Activated B cell treated with CpG ODN at 0.5 μM for 24 hours (primary cell): ENCODE measurements at regions of chr1 and their contacts with region 1.

Region 1: DNA sequence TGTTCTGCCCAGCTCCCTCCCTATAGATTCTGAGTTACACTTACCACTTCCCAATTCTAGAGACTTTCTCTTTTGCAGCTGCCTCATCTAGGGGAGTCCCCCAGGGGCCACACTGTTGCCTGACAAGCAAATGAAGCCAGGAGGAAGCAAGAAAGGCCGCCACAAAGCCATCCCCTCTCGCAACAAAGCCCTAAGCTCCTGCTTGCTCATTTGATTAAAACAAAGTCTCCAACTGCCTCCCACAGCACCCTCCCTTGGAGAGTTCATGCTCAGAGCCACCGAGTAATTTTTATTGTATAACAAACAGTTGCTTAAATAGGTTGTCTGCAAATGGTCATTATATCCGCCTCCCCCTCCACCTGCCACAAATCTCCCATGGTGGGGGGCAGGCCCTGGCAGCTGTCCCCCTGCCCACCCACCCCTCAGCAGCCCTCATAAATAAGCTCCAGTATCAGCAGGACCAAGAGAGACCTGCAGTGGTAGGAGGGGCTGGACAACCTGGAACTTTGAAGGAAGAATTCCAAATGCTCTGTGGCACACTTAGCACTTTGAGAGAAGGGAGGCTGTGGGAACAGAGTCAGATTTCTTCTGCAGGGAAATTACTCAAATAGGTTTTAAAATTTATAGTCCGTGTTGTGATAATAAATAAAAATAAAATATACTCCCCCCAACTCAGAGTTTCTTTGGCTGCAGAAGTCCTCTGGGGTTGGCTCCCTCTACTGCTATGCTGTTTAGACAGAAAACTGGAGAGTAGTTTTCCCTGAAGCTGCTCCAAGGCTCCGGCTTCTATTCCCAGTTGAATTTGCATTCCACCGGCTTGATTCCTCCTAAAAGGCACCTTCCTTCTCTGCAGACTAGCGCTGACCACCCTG is 237.5 kb downstream of the TTLL7 start:
- DNase-seq: peak; percentile 52
- ATAC-seq: peak; percentile 99
- H3K4me3 Mint-ChIP-seq: peak overlapping the region; percentile 39
- H3K27ac Mint-ChIP-seq: peak overlapping the region; percentile 75
- H3K4me1 Mint-ChIP-seq: peaks cover 37% of the 10 kb centered on the region
- H3K27me3 Mint-ChIP-seq: no peaks in the 10 kb centered on the region
- CTCF ChIP-seq: no peak

Region 2: DNA sequence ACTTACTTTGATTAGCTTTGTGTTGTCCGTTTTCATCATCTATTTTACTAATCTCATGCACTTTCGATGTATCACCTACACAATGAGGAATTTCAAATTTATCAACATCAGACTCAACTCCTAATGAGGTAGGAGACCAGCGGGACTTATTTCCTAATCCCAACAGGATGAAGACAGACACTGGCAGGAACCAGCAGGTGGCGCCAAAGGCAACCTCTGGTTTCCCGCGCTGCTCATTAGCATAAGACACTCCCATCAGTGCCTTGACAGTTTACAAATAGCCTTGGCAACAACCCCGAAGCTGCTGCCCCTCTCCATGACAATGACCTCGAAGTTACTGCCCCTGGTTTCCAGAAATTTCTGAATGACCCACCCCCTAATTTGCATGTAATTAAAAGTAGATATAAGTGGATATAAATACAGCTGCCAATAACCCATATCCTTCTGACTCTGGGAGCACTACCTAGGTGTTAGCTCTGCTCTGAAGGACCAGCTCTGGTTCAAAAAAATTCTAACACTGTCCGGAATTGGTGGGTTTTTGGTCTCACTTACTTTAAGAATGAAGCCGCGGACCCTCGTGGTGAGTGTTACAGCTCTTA is 985.9 kb before region 1 on chr1:
- CTCF ChIA-PET with region 1: no interaction called
- POLR2A ChIA-PET with region 1: no interaction called
- intact Hi-C with region 1: loop called (anchors 10 kb)
- DNase-seq: no peak
- ATAC-seq: no peak
- H3K4me3 Mint-ChIP-seq: no peak overlapping the region
- H3K27ac Mint-ChIP-seq: no peak overlapping the region
- H3K4me1 Mint-ChIP-seq: no peaks in the 10 kb centered on the region
- H3K27me3 Mint-ChIP-seq: no peaks in the 10 kb centered on the region
- CTCF ChIP-seq: no peak

Region 3: DNA sequence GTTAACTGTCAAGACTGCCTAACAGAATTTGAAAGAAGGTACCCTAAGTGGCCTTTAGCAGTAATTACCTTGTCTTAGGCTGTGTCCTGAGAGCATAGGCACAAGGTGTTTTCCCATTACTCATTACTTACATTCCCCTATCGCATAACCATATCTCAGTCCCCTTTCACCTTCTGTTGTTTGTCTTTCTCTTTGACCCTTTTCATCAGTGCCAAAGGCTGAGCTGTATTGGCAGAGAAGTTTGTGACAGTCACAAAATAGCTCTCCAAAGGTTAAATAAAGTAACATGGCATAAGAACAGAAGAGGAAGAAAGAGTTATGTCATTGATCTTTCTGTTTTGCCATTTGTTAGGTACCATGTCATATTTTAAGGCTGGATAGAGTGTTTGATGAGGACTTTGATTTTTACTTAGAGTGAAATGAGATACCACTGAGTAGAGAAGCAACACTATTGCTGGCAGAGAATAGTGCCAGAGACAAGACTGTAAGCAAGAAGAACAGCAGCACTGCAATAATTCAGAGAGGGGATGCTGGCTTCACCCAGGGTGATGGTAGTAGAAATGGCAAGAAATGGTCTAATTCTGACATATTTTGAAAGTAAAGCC is 260.3 kb before region 1 on chr1:
- CTCF ChIA-PET with region 1: no interaction called
- POLR2A ChIA-PET with region 1: no interaction called
- intact Hi-C with region 1: loop called (anchors 5 kb)
- DNase-seq: no peak
- ATAC-seq: peak; percentile 74
- H3K4me3 Mint-ChIP-seq: peak overlapping the region; percentile 37
- H3K27ac Mint-ChIP-seq: peak overlapping the region; percentile 82
- H3K4me1 Mint-ChIP-seq: peaks cover 72% of the 10 kb centered on the region
- H3K27me3 Mint-ChIP-seq: no peaks in the 10 kb centered on the region
- CTCF ChIP-seq: no peak

Region 4: DNA sequence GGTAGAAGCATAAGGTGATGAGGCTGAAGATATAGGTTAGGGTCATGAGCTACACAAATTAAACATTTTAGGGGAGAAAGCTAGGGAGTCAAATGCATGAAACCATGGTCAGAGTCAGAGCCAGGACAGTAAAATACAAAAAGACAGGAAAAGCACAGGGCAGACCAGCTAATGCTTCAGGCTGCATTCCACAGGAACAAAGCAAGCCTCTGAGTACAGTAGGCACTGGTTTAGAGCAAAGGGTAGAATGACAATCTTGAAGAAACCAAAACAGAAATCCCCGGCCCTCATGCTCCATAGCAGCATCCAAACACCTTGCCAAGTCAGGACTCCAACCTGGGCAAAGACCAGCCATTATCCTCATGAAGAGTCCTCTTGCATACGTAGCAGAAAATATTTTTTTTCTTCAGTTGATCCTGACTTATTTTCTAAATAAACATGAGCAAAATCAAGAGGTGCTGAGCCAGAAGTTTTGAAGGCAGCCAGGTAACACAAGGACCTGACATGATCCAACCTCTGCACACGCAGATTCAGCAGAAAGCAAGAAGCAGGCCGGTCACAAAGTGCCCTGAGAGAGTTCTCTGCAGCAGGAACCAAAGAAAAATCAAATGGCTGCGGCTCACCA is 35.6 kb before region 1 on chr1:
- CTCF ChIA-PET with region 1: no interaction called
- POLR2A ChIA-PET with region 1: no interaction called
- intact Hi-C with region 1: no loop called
- DNase-seq: no peak
- ATAC-seq: no peak
- H3K4me3 Mint-ChIP-seq: no peak overlapping the region
- H3K27ac Mint-ChIP-seq: no peak overlapping the region
- H3K4me1 Mint-ChIP-seq: no peaks in the 10 kb centered on the region
- H3K27me3 Mint-ChIP-seq: no peaks in the 10 kb centered on the region
- CTCF ChIP-seq: no peak

Region 5: GRCh38 chr1:83746234-83746633 is 15.2 kb before region 1 on chr1:
- CTCF ChIA-PET with region 1: no interaction called
- POLR2A ChIA-PET with region 1: interaction called, 4 read pairs
- intact Hi-C with region 1: loop called (anchors 1 kb)
- DNase-seq: no peak
- ATAC-seq: peak; percentile 91
- H3K4me3 Mint-ChIP-seq: peak overlapping the region; percentile 42
- H3K27ac Mint-ChIP-seq: peak overlapping the region; percentile 60
- H3K4me1 Mint-ChIP-seq: peaks cover 26% of the 10 kb centered on the region
- H3K27me3 Mint-ChIP-seq: no peaks in the 10 kb centered on the region
- CTCF ChIP-seq: no peak

Region 6: GRCh38 chr1:83860490-83861221 is 99.3 kb after region 1 on chr1:
- CTCF ChIA-PET with region 1: no interaction called
- POLR2A ChIA-PET with region 1: no interaction called
- intact Hi-C with region 1: loop called (anchors 2 kb)
- DNase-seq: peak; percentile 73
- ATAC-seq: peak; percentile 91
- H3K4me3 Mint-ChIP-seq: peak overlapping the region; percentile 79
- H3K27ac Mint-ChIP-seq: peak overlapping the region; percentile 64
- H3K4me1 Mint-ChIP-seq: peaks cover 7% of the 10 kb centered on the region
- H3K27me3 Mint-ChIP-seq: no peaks in the 10 kb centered on the region
- CTCF ChIP-seq: peak; percentile 81